Left ventricle myocardium superior (tissue), 1 donor: ENCODE measurements at regions of chr1 and their contacts with region 1.

Region 1: DNA sequence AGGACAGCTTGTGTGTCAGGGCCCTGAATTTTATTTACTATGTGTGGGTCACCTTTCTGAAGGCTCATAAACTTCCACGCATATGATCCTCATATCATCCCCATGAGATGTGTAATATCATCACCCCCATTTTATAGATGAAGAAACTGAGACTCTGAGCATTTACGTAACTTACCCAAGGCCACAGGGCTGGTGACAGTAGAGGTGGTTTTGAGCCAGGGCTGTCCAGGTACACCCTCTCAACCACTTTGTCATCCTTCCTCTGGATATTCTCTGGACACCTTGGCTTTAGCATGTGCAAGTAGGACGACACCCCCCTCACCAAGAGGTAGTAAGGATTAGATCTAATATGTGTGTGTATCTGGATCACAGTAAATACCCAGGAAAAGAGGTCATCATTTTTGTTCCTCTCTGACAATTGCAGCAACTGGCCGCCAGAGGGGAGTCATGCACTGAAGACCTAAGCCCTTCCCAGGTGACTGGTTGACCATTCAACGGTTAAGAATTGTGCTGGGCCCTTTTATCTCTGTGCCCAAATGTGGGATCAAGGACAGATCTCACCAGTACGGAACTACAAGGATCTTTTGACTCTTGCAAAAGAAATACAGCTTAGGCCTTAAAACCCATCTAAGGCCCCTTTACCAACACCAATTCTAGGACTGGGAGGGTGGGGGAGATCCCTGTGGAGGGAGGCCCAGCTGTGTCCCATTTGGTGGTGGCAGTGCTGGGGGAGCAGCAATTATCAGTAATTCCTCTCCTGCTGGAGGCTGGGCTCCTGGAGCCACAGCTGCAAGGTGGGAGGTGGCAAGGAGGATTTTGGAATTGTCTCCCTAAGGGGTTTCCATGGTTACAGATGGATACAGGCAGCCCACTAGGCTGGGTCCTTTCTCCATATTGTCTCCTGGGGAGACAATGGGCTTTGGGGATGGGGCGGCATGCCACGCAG is 13.7 kb upstream of the E2F2 start:
- DNase-seq: peak; percentile 80
- ATAC-seq: peak; percentile 70

Region 2: GRCh38 chr1:23634842-23635651 is 90.3 kb after region 1 on chr1:
- intact Hi-C with region 1: loop called (anchors 1 kb)
- DNase-seq: peak; percentile 47
- ATAC-seq: peak; percentile 55

Region 3: DNA sequence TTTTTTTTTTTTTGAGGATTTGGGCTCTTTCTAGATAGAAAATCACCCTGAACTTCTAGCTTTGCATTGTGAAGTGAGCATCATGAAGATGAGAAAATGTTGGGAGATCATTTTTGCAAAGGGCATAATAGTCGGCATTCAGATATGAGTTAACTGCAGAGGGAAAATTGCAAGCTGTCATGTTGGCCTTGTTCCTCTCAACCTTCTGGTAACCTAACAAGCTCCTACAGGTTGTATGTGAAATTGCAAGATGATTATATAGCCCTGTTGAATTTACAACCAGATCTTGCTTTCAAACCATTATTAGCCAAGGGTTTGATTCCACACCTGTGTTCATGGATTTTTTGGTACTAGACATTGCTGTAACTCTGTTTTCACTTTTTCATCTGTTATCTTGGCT is 200.8 kb after region 1 on chr1:
- intact Hi-C with region 1: loop called (anchors 5 kb)
- DNase-seq: no peak
- ATAC-seq: no peak

Region 4: DNA sequence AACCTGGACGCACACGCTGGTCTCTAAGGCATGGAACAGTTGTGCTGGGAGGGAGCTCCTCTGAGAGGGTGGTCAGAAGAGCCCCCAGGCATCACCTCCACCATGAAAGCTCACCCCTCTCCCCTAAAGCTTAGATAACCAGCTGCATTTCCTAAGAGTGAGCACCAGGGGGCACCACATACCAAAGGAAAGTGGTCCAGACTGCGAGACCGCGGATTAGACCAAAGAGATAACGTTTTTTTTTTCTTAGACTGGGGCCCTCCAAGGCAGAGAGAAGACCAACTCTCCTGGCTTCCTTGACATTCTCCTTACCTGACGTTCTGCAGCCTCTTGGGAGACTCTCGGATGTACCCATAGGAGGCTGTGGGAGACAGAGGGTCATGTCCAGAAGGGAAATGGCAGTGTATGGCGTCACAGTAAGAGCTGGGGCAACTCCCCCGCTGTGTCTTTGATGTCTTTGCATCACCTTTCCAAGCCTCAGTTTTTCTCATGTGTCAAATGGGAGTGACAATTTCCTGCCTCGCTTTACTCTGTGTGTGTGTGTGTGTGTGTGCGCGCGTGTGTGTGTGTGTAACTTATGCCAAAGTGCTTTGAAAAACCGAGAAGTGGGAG is 654.7 kb after region 1 on chr1:
- intact Hi-C with region 1: no loop called
- DNase-seq: peak; percentile 45
- ATAC-seq: peak; percentile 79